Left ventricle myocardium superior (tissue), 1 donor: ENCODE measurements at regions of chr1 and their contacts with region 1.

Region 1: DNA sequence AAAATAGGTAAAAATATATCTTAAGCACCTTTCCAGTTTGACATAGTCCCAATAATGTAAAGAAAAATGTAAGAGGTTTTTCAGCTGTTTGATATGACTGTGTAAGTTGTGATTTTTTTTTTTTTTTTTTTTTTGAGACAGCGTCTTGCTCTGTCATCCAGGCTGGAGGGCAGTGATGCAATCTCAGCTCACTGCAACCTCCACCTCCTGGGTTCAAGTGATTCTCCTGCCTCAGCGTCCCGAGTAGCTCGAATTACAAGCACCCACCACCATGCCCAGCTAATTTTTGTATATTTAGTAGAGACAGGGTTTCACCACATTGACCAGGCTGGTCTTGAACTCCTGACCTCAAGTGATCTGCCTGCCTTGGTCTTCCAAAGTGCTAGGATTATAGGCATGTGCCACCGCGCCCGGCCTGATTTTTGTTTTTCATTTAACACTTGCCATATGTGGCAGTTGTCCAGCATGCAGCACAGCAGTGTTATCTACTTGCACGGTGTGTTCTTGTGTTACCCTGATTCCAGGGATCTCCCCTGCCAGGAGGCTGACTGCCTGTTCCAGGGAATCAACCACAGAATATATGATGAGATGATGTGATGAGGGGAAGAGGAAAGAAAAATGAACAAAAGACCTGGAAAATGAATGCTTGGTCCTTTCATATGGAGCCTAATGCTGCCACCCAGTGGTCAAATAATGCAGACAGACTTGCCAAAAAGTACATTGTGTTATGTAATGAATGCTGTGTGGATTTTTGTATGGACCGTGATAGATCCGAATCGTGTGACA is 79.0 kb downstream of the RAVER2 start:
- DNase-seq: peak; percentile 60
- ATAC-seq: peak; percentile 76

Region 2: GRCh38 chr1:64515427-64515826 is 308.5 kb before region 1 on chr1:
- intact Hi-C with region 1: no loop called
- DNase-seq: peak; percentile 38
- ATAC-seq: peak; percentile 84

Region 3: DNA sequence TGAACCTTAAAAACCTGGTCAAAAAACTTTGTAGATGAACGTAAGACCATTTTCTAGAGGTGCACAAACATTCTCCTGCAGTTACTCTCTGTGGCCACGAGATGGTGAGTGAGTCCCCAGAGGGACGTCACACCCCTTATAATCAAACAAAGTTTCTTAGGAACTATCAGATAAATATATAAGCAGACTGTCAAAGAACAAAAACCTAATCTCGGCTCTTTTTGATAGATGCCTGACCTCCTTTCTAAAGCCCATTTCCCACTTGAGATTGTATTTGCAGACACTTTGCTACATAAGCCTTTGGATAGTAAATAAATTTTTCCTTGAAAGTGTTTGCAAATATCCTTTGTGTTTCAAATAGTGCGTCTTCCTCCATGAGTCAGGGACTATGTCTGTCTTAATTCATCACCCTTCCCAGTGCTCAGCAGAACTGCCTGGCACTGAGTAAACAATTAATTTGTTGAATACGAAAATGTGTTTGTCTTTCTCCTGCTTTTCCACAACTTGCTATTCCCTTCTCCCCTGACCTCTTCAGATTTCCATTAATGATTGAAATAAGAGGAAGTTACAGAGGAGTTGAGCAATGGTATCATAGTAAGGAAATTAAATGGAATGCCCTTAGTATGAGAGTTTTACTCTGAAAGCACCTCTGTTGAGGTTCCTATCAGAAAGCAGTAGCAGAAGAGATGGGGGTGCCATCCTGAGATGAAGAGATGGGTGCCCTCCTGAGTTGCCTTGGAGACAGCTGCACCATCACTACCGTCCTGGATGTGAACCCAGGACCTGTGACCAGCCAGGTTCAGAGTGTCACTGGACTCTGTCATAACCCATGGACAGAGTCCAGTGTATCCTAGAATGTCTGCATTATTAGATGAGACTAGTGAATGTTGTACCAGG is 136.8 kb before region 1 on chr1:
- intact Hi-C with region 1: loop called (anchors 2 kb)
- DNase-seq: no peak
- ATAC-seq: peak; percentile 76